ENCODE measurements at regions of chrX and their contacts with region 1.

Region 1: GRCh38 chrX:103533511-103534216 is 14.4 kb upstream of the RAB40A start:
- DNase-seq: peak; percentile 82 to 91
- H3K4me3 ChIP-seq: peak overlapping the region; percentile 20 to 32
- H3K27ac ChIP-seq: peak overlapping the region; percentile 86 to 97
- H3K4me1 ChIP-seq: no peaks in the 10 kb centered on the region
- H3K27me3 ChIP-seq: peaks cover 0 to 11% of the 10 kb centered on the region in 2 donors
- CTCF ChIP-seq: peak; percentile 73 to 82 (median 77)
- POLR2A ChIP-seq: no peak

Region 2: GRCh38 chrX:103629318-103630170 is 95.9 kb after region 1 on chrX:
- intact Hi-C with region 1: loop called (anchors 10 kb)
- DNase-seq: peak; percentile 72 to 80
- H3K4me3 ChIP-seq: peak overlapping the region; percentile 53 to 55
- H3K27ac ChIP-seq: peak overlapping the region; percentile 96
- H3K4me1 ChIP-seq: no peaks in the 10 kb centered on the region
- H3K27me3 ChIP-seq: peaks cover 0 to 11% of the 10 kb centered on the region in 2 donors
- CTCF ChIP-seq: peak; percentile 44 to 74 (median 50)
- POLR2A ChIP-seq: peak; percentile 47 to 61

Region 3: DNA sequence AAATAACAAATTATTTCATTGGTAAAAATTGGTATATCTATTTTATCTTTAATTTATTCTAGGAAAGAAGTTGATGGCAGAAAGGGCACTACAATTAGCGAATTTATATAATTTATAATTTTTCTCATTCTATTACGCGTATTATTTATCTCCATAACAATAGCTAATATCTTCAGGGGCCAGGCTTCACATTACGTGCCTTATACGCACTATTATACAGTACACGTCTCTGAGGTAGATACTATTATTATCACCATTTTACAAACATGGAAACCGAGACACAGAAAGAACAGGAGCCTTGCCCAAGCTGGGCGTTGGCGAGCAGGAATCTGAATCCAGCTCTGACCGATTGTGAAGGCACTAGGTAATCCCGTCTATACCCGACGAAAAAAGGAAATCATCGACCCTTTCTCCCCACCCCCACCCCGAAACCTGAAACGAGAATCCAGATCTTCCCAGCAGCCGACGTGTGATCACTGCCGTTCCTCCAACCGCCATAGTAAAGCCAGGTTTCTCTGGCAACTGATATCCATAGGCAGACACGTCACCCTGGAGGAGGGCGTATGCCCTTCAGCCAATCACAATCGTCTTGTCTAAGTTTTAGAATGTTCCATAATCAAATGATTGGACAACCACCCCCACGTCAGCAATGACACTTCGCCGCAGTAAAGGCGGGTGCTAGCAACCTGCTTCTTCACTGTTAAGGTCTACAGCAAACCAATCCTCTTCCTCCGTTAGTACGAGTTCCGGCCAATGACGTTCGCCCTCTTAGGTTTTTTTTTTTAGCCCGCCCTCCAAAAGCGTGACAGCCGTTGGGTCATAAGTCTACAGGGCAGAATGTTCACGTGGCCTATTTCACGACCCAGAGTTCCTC is 152.8 kb after region 1 on chrX and contains the start of gene MORF4L2:
- intact Hi-C with region 1: loop called (anchors 5 kb)
- DNase-seq: peak; percentile 87 to 96
- H3K4me3 ChIP-seq: peak within 1 kb of the TSS; percentile 47 to 57
- H3K27ac ChIP-seq: peak within 1 kb of the TSS; percentile 93 to 95
- H3K4me1 ChIP-seq: no peaks in the 10 kb centered on the region
- H3K27me3 ChIP-seq: no peaks in the 10 kb centered on the region
- CTCF ChIP-seq: no peak
- POLR2A ChIP-seq: peak; percentile 84 to 86
- total RNA-seq, gene MORF4L2: 258 to 722 (median 535) TPM

Region 4: GRCh38 chrX:103817502-103817901 is 283.8 kb after region 1 on chrX:
- intact Hi-C with region 1: loop called (anchors 10 kb)
- DNase-seq: peak in 1 of 2 donors; percentile 17
- H3K4me3 ChIP-seq: no peak overlapping the region
- H3K27ac ChIP-seq: no peak overlapping the region
- H3K4me1 ChIP-seq: no peaks in the 10 kb centered on the region
- H3K27me3 ChIP-seq: no peaks in the 10 kb centered on the region
- CTCF ChIP-seq: peak; percentile 61 to 89 (median 74)
- POLR2A ChIP-seq: no peak

Region 5: GRCh38 chrX:105136786-105137185 is 1603.1 kb after region 1 on chrX:
- intact Hi-C with region 1: no loop called
- DNase-seq: no peak
- H3K4me3 ChIP-seq: no peak overlapping the region
- H3K27ac ChIP-seq: no peak overlapping the region
- H3K4me1 ChIP-seq: no peaks in the 10 kb centered on the region
- H3K27me3 ChIP-seq: peaks cover 0 to 22% of the 10 kb centered on the region in 2 donors
- CTCF ChIP-seq: no peak
- POLR2A ChIP-seq: no peak